SK-N-SH (cell line): ENCODE measurements at regions of chr3 and their contacts with region 1.

Region 1: GRCh38 chr3:128170805-128171516 is 17.7 kb downstream of the EEFSEC start:
- DNase-seq: peak; percentile 80
- H3K4me3 ChIP-seq: no peak overlapping the region; a peak in 1 of 4 replicates
- H3K27ac ChIP-seq: peak overlapping the region in 1 of 2 experiments; percentile 76; a peak in 2 of 4 replicates
- H3K4me1 ChIP-seq: peaks cover 0 to 73% of the 10 kb centered on the region in 2 experiments; a peak in 2 of 4 replicates
- H3K27me3 ChIP-seq: no peaks in the 10 kb centered on the region
- CTCF ChIP-seq: peak; percentile 92
- EP300 ChIP-seq: peak in 1 of 2 experiments; percentile 40; a peak in 1 of 4 replicates
- RAD21 ChIP-seq: peak; percentile 98

Region 2: GRCh38 chr3:128095222-128095703 is 75.7 kb before region 1 on chr3:
- CTCF ChIA-PET with region 1: interaction called, 38 read pairs
- POLR2A ChIA-PET with region 1: no interaction called
- DNase-seq: peak; percentile 86
- H3K4me3 ChIP-seq: no peak overlapping the region; a peak in 1 of 4 replicates
- H3K27ac ChIP-seq: peak overlapping the region; percentile 43 to 80; a peak in 3 of 4 replicates
- H3K4me1 ChIP-seq: peaks cover 9 to 12% of the 10 kb centered on the region in 2 experiments; a peak in 1 of 4 replicates
- H3K27me3 ChIP-seq: no peaks in the 10 kb centered on the region
- CTCF ChIP-seq: peak; percentile 94
- EP300 ChIP-seq: no peak
- RAD21 ChIP-seq: peak; percentile 95

Region 3: GRCh38 chr3:128278761-128279600 is 108.0 kb after region 1 on chr3:
- CTCF ChIA-PET with region 1: interaction called, 12 read pairs
- POLR2A ChIA-PET with region 1: interaction called, 3 read pairs
- DNase-seq: peak; percentile 88
- H3K4me3 ChIP-seq: no peak overlapping the region; a peak in 1 of 4 replicates
- H3K27ac ChIP-seq: peak overlapping the region; percentile 62 to 100
- H3K4me1 ChIP-seq: peaks cover 45 to 98% of the 10 kb centered on the region in 2 experiments
- H3K27me3 ChIP-seq: no peaks in the 10 kb centered on the region
- CTCF ChIP-seq: no peak
- EP300 ChIP-seq: peak; percentile 74 to 90
- RAD21 ChIP-seq: no peak; the same call in 1 of the 2 replicates

Region 4: DNA sequence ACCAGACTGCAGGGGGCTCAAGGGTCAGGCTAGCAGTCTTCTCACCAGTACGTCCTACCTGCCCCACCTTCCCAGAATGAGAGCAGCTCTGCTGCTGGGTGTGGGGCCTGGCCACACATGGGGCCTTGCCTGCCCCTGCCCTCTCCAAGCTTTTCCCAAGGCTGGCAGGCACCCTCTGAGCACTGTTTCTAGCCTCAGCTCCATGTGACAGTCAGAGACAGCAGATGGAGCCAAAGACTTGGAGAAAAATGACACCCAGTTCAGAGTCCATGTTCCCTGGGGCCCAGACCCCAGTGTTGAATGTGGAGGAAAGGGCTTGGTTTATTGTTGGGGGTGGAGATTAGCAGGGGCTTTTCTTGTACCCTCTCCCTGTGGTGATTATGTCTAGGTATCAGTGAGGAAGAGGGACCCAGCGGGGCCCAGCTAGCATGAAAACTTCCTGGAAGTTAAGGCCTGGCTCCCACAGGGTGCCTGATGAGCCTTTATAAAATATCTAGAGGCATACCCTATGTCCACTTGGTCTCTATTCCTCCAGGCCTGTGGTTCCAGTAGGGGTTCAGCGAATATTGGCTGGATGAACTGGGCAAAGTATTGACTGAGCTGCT is 136.2 kb after region 1 on chr3:
- CTCF ChIA-PET with region 1: interaction called, 13 read pairs
- POLR2A ChIA-PET with region 1: no interaction called
- DNase-seq: peak; percentile 58
- H3K4me3 ChIP-seq: no peak overlapping the region
- H3K27ac ChIP-seq: peak overlapping the region in 1 of 2 experiments; percentile 67; a peak in 2 of 4 replicates
- H3K4me1 ChIP-seq: peaks cover 0 to 26% of the 10 kb centered on the region in 2 experiments; a peak in 2 of 4 replicates
- H3K27me3 ChIP-seq: no peaks in the 10 kb centered on the region
- CTCF ChIP-seq: no peak; the same call in 1 of the 2 replicates
- EP300 ChIP-seq: no peak
- RAD21 ChIP-seq: peak; percentile 89

Region 5: DNA sequence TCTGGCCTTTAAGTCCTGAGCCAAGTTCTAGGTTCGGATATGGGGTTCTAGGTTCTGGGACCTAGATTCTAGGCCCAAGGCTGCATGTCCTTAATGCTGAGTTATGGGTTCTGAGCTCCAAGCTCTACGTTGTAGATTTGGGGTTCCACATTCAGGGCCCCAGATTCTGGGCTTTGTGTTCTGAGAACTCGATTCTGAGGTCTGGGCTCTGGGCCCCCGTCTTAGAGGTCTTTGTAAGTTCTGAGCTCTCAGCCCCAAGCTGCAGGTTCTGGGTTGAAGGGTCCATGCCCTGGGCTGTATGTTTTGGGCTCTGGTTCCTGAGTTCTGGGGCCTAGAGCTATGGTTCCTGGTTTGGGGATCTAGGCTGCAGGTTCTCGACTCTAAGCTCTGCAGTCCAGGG is 305.7 kb after region 1 on chr3:
- CTCF ChIA-PET with region 1: interaction called, 11 read pairs
- POLR2A ChIA-PET with region 1: no interaction called
- DNase-seq: no peak
- H3K4me3 ChIP-seq: no peak overlapping the region
- H3K27ac ChIP-seq: peak overlapping the region in 1 of 2 experiments; percentile 39; a peak in 2 of 4 replicates
- H3K4me1 ChIP-seq: peaks cover 0 to 55% of the 10 kb centered on the region in 2 experiments; a peak in 1 of 4 replicates
- H3K27me3 ChIP-seq: peaks cover 7% of the 10 kb centered on the region
- CTCF ChIP-seq: no peak
- EP300 ChIP-seq: no peak
- RAD21 ChIP-seq: no peak